ENCODE measurements at regions of chr2 and their contacts with region 1.

Region 1: GRCh38 chr2:18520451-18521425 is 39.7 kb downstream of the RDH14 start:
- DNase-seq: peak; percentile 74 to 80
- ATAC-seq: peak; percentile 93 to 98
- H3K4me3 ChIP-seq: no peak overlapping the region
- H3K27ac ChIP-seq: no peak overlapping the region
- H3K4me1 ChIP-seq: no peaks in the 10 kb centered on the region
- CTCF ChIP-seq: peak; percentile 97
- EP300 ChIP-seq: no peak
- POLR2A ChIP-seq: no peak
- RAD21 ChIP-seq: peak; percentile 96 to 98

Region 2: DNA sequence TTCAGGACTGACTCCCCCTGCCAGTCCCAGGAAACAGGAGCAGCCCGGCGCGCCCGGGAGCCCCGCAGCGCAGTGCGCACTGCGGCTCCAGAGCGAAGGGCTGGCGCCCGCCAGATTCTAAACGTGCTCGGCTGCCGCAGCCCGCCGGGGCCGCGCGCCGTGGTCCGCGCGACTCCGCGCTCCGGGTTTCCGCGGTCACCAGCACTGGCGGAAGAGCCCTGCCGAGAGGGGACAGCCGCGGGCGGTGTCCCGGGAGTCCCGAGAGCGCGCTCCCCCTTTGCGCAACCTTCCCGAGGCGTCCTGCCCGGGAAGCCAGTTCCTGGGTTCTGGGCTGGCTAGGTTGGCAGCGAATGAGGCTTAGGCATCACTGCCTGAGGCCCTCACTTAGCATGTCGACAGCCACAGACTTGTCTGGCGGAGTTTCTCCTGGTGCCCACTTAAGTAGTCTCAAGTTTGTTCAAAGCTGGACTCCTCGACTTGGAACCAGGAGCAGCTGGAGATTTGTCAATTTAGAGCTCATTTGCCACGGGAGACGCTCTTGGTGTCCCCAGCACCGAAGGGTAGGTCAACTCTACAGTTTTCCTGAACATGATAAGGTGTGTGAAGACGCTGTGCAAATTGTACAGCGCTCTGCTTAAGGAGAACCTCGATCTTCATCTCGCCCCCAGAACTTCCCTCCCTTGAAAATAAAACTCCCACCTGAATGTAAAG is 981.7 kb before region 1 on chr2:
- CTCF ChIA-PET with region 1: no interaction called
- POLR2A ChIA-PET with region 1: no interaction called
- DNase-seq: peak in 1 of 2 experiments; percentile 39
- ATAC-seq: peak; percentile 63 to 78
- H3K4me3 ChIP-seq: peak overlapping the region; percentile 39
- H3K27ac ChIP-seq: no peak overlapping the region
- H3K4me1 ChIP-seq: 0 out of 3 replicates have a peak, but pooled peaks cover 3% of the 10 kb centered on the region
- CTCF ChIP-seq: no peak
- EP300 ChIP-seq: no peak
- POLR2A ChIP-seq: no peak
- RAD21 ChIP-seq: no peak

Region 3: DNA sequence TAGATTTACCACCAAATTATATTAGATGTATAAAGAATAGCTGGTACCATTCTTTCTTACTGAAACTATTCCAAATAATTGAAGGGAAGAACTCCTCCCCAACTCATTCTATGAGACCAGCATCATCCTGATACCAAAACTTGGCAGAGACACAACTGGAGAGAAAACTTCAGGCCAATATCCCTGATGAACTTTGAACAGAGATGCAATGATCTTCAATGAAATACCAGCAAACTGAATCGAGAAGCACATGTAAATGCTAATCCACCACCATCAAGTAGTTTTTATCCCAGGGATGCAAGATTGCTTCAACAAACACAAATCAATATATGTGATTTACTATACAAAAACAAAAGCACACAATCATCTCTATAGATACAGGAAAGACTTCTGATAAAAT is 290.1 kb before region 1 on chr2:
- CTCF ChIA-PET with region 1: no interaction called
- POLR2A ChIA-PET with region 1: no interaction called
- DNase-seq: no peak
- ATAC-seq: no peak
- H3K4me3 ChIP-seq: no peak overlapping the region
- H3K27ac ChIP-seq: no peak overlapping the region
- H3K4me1 ChIP-seq: peaks cover 18% of the 10 kb centered on the region
- CTCF ChIP-seq: no peak
- EP300 ChIP-seq: no peak
- POLR2A ChIP-seq: no peak
- RAD21 ChIP-seq: no peak

Region 4: GRCh38 chr2:18387441-18388206 is 133.1 kb before region 1 on chr2:
- CTCF ChIA-PET with region 1: interaction called, 13 read pairs
- POLR2A ChIA-PET with region 1: no interaction called
- DNase-seq: peak; percentile 54 to 82
- ATAC-seq: peak; percentile 95 to 97
- H3K4me3 ChIP-seq: no peak overlapping the region
- H3K27ac ChIP-seq: peak overlapping the region; percentile 31 to 56; a peak in 3 of 6 replicates
- H3K4me1 ChIP-seq: no peaks in the 10 kb centered on the region
- CTCF ChIP-seq: peak; percentile 97
- EP300 ChIP-seq: no peak
- POLR2A ChIP-seq: no peak
- RAD21 ChIP-seq: peak; percentile 95 to 96

Region 5: DNA sequence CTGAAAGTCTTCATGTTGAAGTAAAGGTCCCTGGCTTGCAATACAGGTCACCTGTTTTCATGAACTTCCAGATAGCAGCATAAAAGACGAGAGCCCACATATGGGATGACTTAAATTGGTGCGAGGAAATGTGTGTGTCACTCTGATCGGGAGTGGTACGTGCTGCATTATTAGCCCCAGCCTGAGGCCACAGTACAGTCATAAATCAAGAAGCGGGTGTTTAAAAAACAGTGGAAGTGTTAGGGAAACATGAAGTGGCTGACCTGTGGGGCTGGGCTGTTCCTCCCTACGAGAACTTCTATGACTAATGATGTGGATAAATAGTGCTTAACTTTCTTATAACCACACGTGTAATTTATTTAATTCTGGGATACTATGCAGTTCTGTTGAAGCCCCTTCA is 15.4 kb after region 1 on chr2:
- CTCF ChIA-PET with region 1: interaction called, 88 read pairs
- POLR2A ChIA-PET with region 1: no interaction called
- DNase-seq: no peak
- ATAC-seq: no peak
- H3K4me3 ChIP-seq: no peak overlapping the region
- H3K27ac ChIP-seq: no peak overlapping the region
- H3K4me1 ChIP-seq: no peaks in the 10 kb centered on the region
- CTCF ChIP-seq: no peak
- EP300 ChIP-seq: no peak
- POLR2A ChIP-seq: no peak
- RAD21 ChIP-seq: no peak

Region 6: GRCh38 chr2:18560031-18560796 is 39.5 kb after region 1 on chr2 and contains the start of gene RDH14:
- CTCF ChIA-PET with region 1: interaction called, 11 read pairs
- POLR2A ChIA-PET with region 1: no interaction called
- DNase-seq: peak; percentile 89 to 94
- ATAC-seq: peak; percentile 98 to 99
- H3K4me3 ChIP-seq: peak within 1 kb of the TSS; percentile 86
- H3K27ac ChIP-seq: peak within 1 kb of the TSS; percentile 92 to 96
- H3K4me1 ChIP-seq: peaks cover 15% of the 10 kb centered on the region
- CTCF ChIP-seq: no peak
- EP300 ChIP-seq: no peak
- POLR2A ChIP-seq: no peak
- RAD21 ChIP-seq: no peak
- polyA plus RNA-seq, gene RDH14: 42.2 and 44.5 TPM in 2 replicates

Region 7: DNA sequence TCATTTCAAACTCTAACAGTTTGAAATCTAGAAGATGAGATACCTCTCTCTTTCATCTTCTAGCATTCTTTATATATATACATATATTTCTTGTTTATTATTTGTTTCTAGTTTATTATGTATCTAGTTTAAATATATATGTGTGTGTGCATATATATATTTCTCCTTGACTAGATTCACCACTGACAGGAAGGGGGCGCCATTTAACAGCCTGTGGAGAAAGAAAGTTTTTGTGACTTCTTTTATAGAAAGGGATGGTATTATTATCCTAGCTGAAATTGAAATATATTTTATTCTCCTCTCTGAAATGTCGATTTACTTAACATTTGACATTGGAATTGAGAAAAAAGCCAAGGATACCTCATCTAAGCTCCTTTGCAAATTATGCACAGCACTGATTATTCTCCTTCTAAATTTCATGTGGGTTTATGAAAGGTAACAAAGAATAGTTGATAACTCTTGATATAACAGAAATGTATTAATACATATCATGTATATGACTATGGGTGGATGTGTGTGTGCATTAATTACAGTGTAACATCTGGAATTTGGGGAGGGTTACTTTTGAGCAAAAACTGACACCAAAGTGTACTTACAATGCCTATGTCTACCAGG is 229.3 kb after region 1 on chr2:
- CTCF ChIA-PET with region 1: interaction called, 31 read pairs
- POLR2A ChIA-PET with region 1: no interaction called
- DNase-seq: peak; percentile 28 to 68
- ATAC-seq: peak; percentile 40 to 77; a peak in 3 of 6 replicates
- H3K4me3 ChIP-seq: no peak overlapping the region
- H3K27ac ChIP-seq: peak overlapping the region in 1 of 2 experiments; percentile 51; a peak in 1 of 6 replicates
- H3K4me1 ChIP-seq: peaks cover 22% of the 10 kb centered on the region
- CTCF ChIP-seq: peak; percentile 97
- EP300 ChIP-seq: no peak
- POLR2A ChIP-seq: no peak
- RAD21 ChIP-seq: peak; percentile 97

Region 8: GRCh38 chr2:19369341-19369955 is 848.7 kb after region 1 on chr2:
- CTCF ChIA-PET with region 1: interaction called, 37 read pairs
- POLR2A ChIA-PET with region 1: no interaction called
- DNase-seq: peak in 1 of 2 experiments; percentile 58
- ATAC-seq: peak; percentile 48 to 84; a peak in 4 of 6 replicates
- H3K4me3 ChIP-seq: no peak overlapping the region
- H3K27ac ChIP-seq: peak overlapping the region in 1 of 2 experiments; percentile 34; a peak in 3 of 6 replicates
- H3K4me1 ChIP-seq: no peaks in the 10 kb centered on the region
- CTCF ChIP-seq: peak; percentile 61
- EP300 ChIP-seq: no peak
- POLR2A ChIP-seq: no peak
- RAD21 ChIP-seq: peak; percentile 81 to 84

Measured in A549 (cell line).